ENCODE measurements at regions of chr12 and their contacts with region 1.

Region 1: GRCh38 chr12:96985480-96986362 is 78.7 kb downstream of the NEDD1 start:
- DNase-seq: peak in 5 of 42 donors; percentile 17 to 46 (median 42)

Region 2: DNA sequence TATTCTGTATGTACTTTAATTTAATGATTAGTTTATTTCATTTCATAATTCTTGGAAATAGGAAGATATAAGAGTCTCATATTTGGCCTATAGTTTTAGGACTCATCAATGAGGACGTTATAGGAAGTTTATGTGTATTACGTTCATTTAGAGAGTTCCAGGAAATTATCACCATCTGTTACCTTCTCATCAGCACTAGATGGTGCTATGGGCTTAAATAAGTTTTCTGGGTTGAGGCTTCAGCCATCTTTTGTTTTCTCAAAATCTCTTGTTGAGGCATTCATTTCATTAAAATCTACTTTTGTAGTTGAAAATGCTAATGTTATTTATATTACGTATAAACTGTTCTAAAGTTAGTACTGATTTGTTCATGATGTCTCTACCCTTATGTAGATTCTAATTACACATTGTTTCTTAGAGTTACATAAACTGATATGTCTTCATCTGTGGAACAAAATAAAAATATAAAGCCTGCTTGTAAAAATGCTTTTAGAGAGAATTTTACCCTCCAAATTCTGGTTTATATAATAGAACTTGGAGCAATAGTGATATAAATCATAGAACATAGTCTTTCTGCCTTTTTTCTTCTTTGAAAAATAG is 407.1 kb before region 1 on chr12:
- intact Hi-C with region 1: loop called (anchors 10 kb)
- DNase-seq: peak in 5 of 42 donors; percentile 3 to 53 (median 12)

Region 3: DNA sequence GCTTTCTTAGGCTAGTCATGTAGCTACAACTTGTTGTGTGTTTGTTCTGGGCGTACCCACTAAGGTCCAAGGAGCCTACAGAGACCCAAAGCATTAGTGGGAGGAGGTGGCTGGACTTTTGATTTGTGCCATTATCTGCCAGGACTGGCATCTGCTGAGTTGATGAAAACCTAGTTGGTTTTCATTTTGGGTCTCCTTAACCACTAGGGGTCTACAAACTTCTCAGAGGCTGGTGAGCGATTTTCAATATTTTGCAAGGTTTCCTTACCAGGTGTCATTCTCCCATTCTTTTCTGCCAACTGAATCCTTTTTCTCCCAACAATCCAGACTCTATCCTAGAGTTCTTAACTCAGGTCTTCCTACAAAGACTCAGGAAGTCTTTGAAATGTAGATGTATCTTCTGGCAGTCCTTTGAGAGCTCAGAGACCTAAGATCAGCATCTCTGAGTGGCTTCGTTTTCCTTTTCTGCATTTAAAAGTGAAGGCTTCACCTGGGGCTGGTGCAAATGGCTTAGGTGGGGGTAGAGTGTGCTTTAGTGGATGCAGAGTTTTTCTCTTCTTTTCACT is 326.9 kb after region 1 on chr12:
- intact Hi-C with region 1: loop called (anchors 5 kb)
- DNase-seq: no peak